Transverse colon (tissue), 4 donors: ENCODE measurements at regions of chr12 and their contacts with region 1.

Region 1: DNA sequence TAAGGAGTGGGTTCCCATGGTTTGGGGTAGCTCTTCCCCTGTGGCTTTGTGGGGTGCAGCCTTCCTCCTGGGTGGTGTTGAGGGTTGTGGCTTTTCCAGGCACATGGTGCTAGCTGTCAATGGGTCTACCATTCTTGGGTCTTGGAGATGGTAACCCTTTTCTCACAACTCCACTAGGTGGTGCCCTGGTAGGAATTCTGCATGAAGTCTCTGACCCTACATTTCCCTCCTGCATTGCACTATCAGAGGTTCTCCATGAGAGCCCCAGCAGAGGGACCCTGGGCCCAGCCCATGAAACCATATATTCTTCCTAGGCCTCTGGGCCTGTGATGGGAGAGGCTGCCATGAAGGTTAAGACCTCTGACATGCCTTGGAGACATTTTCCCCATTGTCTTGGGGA is 1093.3 kb downstream of the SLC16A7 start:
- DNase-seq: no peak
- H3K4me3 ChIP-seq: no peak overlapping the region
- H3K27ac ChIP-seq: no peak overlapping the region
- H3K4me1 ChIP-seq: no peaks in the 10 kb centered on the region
- H3K27me3 ChIP-seq: no peaks in the 10 kb centered on the region
- CTCF ChIP-seq: no peak
- EP300 ChIP-seq: no peak
- POLR2A ChIP-seq: no peak

Region 2: DNA sequence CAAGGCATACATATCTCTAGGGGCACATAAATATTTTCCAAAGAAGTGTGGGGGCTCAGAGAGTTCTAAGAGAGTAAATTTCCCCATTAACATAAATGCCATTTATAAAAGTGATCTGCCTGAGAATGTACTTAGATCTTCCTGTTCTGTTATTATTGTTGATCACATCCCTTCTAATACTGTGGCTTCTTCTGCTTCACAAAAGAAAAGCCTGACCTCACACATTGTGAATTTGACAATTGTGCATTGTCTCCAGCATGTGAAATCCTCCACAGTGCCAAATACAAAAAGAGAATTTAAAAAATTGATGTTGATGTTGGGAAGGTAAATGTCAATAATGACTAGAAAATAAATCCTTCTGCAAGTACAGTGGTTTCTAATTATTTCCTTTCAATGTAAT is 1438.4 kb before region 1 on chr12:
- in situ Hi-C with region 1: no loop called
- intact Hi-C with region 1: loop called (anchors 5 kb)
- DNase-seq: no peak
- H3K4me3 ChIP-seq: no peak overlapping the region
- H3K27ac ChIP-seq: no peak overlapping the region
- H3K4me1 ChIP-seq: no peaks in the 10 kb centered on the region
- H3K27me3 ChIP-seq: no peaks in the 10 kb centered on the region
- CTCF ChIP-seq: no peak
- EP300 ChIP-seq: no peak
- POLR2A ChIP-seq: no peak

Region 3: GRCh38 chr12:60568914-60569313 is 120.2 kb before region 1 on chr12:
- in situ Hi-C with region 1: no loop called
- intact Hi-C with region 1: no loop called
- DNase-seq: no peak
- H3K4me3 ChIP-seq: no peak overlapping the region
- H3K27ac ChIP-seq: no peak overlapping the region
- H3K4me1 ChIP-seq: no peaks in the 10 kb centered on the region
- H3K27me3 ChIP-seq: no peaks in the 10 kb centered on the region
- CTCF ChIP-seq: no peak
- EP300 ChIP-seq: no peak
- POLR2A ChIP-seq: no peak

Region 4: DNA sequence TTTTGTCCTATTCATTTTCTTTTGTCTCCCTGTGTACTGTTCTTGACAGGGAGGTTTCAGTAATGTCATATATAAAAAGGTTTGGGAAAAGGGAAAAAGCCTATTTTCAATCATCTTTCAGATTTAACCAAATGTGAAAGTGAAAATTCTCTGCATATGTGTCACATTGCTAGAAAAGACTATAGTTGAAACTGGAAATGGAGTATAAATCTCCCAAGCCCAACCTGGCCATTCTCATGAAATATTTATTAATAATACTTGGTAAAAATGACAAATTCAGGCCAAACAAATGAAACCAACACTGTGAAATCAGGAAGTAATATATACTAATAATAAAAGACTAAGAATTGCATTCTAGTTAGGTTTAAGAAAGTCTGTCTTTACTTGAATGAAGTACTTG is 35.9 kb after region 1 on chr12:
- in situ Hi-C with region 1: no loop called
- intact Hi-C with region 1: loop called (anchors 1 kb)
- DNase-seq: no peak
- H3K4me3 ChIP-seq: no peak overlapping the region
- H3K27ac ChIP-seq: no peak overlapping the region
- H3K4me1 ChIP-seq: no peaks in the 10 kb centered on the region
- H3K27me3 ChIP-seq: no peaks in the 10 kb centered on the region
- CTCF ChIP-seq: no peak
- EP300 ChIP-seq: no peak
- POLR2A ChIP-seq: no peak